Mammary epithelial cell (primary cell): ENCODE measurements at regions of chr7 and their contacts with region 1.

Region 1: DNA sequence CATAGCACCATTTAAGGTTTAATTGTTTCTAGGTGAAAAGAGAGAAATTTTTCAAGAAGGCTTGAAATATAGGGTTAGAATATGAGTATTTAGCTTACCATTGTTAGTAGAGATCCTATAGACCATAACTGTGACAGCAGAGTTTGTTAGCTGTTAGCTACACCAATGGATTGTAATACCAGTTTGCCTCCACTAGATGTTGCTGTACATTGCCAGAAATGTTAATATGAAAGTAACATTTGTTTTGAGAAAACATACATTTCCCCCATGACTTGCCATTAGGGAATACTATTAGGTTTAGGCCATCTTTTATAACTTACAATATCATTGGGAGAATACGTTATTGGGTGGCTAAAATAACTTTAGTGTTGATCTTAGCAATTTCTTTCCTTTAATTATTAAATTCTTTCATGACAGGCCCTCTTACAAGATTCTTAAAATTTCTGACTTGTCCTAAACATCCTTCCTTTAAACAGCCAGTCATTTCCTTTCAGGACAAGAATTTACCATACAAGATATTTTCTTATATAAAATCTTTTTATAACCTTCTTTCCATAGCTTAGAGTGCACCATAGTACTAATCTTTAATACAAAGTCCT is 39.5 kb downstream of the ZNF117 start:
- DNase-seq: peak; percentile 34
- H3K4me3 ChIP-seq: no peak overlapping the region
- H3K27ac ChIP-seq: no peak overlapping the region
- H3K4me1 ChIP-seq: no peaks in the 10 kb centered on the region
- H3K27me3 ChIP-seq: peaks cover 12% of the 10 kb centered on the region
- CTCF ChIP-seq: peak; percentile 69 to 78

Region 2: GRCh38 chr7:64636386-64636785 is 315.0 kb before region 1 on chr7:
- CTCF ChIA-PET with region 1: no interaction called
- dilution Hi-C with region 1: no loop called
- in situ Hi-C with region 1: no loop called
- intact Hi-C with region 1: loop called (anchors 5 kb)
- DNase-seq: no peak
- H3K4me3 ChIP-seq: no peak overlapping the region
- H3K27ac ChIP-seq: no peak overlapping the region
- H3K4me1 ChIP-seq: no peaks in the 10 kb centered on the region
- H3K27me3 ChIP-seq: no peaks in the 10 kb centered on the region
- CTCF ChIP-seq: peak in 1 of 2 donors; percentile 35

Region 3: GRCh38 chr7:64849250-64849923 is 102.0 kb before region 1 on chr7:
- CTCF ChIA-PET with region 1: no interaction called
- dilution Hi-C with region 1: no loop called
- in situ Hi-C with region 1: no loop called
- intact Hi-C with region 1: loop called (anchors 10 kb)
- DNase-seq: peak; percentile 94
- H3K4me3 ChIP-seq: no peak overlapping the region
- H3K27ac ChIP-seq: peak overlapping the region; percentile 55
- H3K4me1 ChIP-seq: peaks cover 12% of the 10 kb centered on the region
- H3K27me3 ChIP-seq: no peaks in the 10 kb centered on the region
- CTCF ChIP-seq: no peak

Region 4: GRCh38 chr7:64876792-64877713 is 74.3 kb before region 1 on chr7:
- CTCF ChIA-PET with region 1: no interaction called
- dilution Hi-C with region 1: loop called (anchors 5 kb)
- in situ Hi-C with region 1: no loop called
- intact Hi-C with region 1: no loop called
- DNase-seq: peak; percentile 19
- H3K4me3 ChIP-seq: peak overlapping the region in 1 of 3 experiments; percentile 31
- H3K27ac ChIP-seq: no peak overlapping the region
- H3K4me1 ChIP-seq: peaks cover under 1% of the 10 kb centered on the region
- H3K27me3 ChIP-seq: no peaks in the 10 kb centered on the region
- CTCF ChIP-seq: no peak

Region 5: GRCh38 chr7:65216459-65216858 is 265.1 kb after region 1 on chr7:
- CTCF ChIA-PET with region 1: no interaction called
- dilution Hi-C with region 1: no loop called
- in situ Hi-C with region 1: no loop called
- intact Hi-C with region 1: loop called (anchors 1 kb)
- DNase-seq: peak; percentile 52
- H3K4me3 ChIP-seq: no peak overlapping the region
- H3K27ac ChIP-seq: no peak overlapping the region
- H3K4me1 ChIP-seq: no peaks in the 10 kb centered on the region
- H3K27me3 ChIP-seq: no peaks in the 10 kb centered on the region
- CTCF ChIP-seq: peak; percentile 42 to 71

Region 6: DNA sequence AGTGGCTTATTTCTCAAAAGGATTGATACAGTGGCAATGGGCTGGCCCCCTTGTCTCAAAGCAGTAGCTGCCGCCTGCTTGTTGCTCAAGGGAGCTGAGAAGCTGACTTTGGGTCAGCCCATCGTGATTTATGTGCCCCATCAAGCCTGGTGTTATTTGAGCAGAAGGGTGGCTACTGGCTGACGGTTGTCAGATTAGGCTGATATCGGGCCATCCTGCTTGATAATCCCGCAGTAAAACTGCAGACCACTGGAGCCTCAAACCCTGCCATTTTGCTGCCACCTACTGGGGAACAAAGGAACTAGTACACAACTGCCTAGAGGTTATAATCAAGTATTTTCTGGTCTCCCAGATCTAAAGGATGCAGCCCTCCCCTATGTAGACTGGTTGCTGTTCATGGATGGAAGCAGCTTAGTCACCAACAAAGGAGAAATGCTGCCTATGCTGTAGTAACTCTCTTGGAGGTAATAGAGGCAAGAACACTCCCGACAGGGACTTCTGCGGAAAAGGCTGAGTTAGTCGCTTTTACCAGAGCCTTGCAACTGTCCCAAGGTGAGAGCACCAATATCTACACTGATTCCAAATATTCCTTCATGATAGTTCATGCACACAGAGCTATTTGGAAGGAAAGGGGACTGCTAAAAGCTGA is 356.4 kb after region 1 on chr7:
- CTCF ChIA-PET with region 1: interaction called, 5 read pairs
- dilution Hi-C with region 1: no loop called
- in situ Hi-C with region 1: no loop called
- intact Hi-C with region 1: loop called (anchors 1 kb)
- DNase-seq: peak; percentile 23
- H3K4me3 ChIP-seq: no peak overlapping the region
- H3K27ac ChIP-seq: no peak overlapping the region
- H3K4me1 ChIP-seq: no peaks in the 10 kb centered on the region
- H3K27me3 ChIP-seq: no peaks in the 10 kb centered on the region
- CTCF ChIP-seq: peak; percentile 66 to 83

Region 7: GRCh38 chr7:66013916-66014315 is 1062.6 kb after region 1 on chr7:
- CTCF ChIA-PET with region 1: interaction called, 15 read pairs
- dilution Hi-C with region 1: no loop called
- in situ Hi-C with region 1: no loop called
- intact Hi-C with region 1: no loop called
- DNase-seq: peak; percentile 26
- H3K4me3 ChIP-seq: no peak overlapping the region
- H3K27ac ChIP-seq: no peak overlapping the region
- H3K4me1 ChIP-seq: peaks cover 7% of the 10 kb centered on the region
- H3K27me3 ChIP-seq: no peaks in the 10 kb centered on the region
- CTCF ChIP-seq: peak; percentile 15 to 20